ENCODE measurements at regions of chr4 and their contacts with region 1.

Region 1: DNA sequence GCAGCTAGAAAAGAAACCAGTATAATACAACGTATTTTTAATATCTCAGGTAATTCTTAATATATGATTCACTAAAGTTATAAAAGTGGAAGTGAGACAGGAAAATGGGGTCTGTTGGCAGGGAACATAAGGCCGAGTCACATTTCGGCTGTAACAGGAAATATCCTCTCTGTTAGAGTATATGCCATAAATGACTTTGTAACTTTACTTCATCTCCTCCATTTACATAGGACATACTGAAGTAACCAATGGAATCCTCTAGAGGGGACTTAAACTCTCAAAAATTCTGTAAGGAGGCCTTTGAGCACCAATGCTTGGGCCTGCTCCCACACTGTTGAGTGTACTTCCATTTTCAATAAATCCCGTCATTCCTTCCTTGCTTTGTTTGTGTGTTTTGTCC is 71.3 kb downstream of the ANKRD17 start:
- DNase-seq: no peak
- H3K4me3 ChIP-seq: no peak overlapping the region
- H3K27ac ChIP-seq: no peak overlapping the region
- H3K27me3 ChIP-seq: no peaks in the 10 kb centered on the region
- CTCF ChIP-seq: no peak

Region 2: DNA sequence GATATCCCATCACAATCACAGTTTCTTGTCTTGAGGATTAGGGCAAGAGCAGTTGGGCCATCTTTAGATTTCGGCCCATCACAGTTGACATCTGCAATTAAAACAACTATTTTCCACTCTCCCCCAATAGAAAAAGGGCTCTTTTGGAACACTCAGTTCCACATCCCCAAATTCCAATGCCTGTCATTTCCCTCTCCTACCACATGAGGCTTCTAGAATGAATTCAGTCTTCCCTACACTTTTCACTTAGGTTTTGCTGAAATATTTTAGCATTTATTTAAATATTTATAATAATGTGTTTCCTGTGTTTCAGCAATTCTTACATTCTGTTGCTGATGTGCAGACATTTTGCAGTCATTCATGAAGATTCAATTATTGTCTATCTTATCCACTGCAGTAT is 236.2 kb before region 1 on chr4:
- CTCF ChIA-PET with region 1: no interaction called
- POLR2A ChIA-PET with region 1: no interaction called
- DNase-seq: no peak
- H3K4me3 ChIP-seq: no peak overlapping the region
- H3K27ac ChIP-seq: no peak overlapping the region
- H3K27me3 ChIP-seq: no peaks in the 10 kb centered on the region
- CTCF ChIP-seq: peak; percentile 46

Region 3: DNA sequence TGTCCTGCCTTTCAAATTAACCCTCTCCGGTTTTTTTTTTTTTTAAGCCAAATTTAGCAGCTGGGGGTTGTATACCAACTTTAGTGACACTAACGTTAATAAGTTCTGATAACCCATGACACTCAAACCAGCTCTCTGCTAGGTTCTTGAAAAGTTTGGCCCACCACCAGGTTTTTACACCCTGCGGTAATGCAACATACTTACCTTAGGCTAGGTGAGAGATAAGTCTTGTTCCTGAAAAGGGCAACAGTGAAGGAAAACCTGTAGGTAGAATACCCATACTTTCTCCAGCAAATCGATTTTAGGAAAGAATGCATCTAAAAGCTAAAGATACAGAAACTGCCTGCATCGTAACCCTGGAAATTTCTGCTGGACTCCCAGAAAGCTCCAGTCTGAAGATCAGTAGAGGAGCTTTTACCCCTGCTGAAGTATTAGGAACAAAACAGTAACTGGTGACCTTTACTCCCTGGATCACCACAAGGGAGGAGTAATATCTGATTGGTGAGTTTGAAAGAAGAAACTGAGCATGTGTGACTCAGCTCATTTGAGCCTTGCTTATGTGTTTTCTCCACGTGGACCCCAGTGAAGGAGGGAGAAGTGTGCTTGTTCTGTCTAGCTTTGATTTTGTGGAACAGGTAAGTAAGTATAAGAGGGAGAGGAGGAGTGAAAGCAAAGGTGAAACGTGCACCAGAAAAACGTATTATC is 83.4 kb before region 1 on chr4:
- CTCF ChIA-PET with region 1: no interaction called
- POLR2A ChIA-PET with region 1: no interaction called
- DNase-seq: no peak
- H3K4me3 ChIP-seq: no peak overlapping the region
- H3K27ac ChIP-seq: no peak overlapping the region
- H3K27me3 ChIP-seq: no peaks in the 10 kb centered on the region
- CTCF ChIP-seq: no peak

Region 4: DNA sequence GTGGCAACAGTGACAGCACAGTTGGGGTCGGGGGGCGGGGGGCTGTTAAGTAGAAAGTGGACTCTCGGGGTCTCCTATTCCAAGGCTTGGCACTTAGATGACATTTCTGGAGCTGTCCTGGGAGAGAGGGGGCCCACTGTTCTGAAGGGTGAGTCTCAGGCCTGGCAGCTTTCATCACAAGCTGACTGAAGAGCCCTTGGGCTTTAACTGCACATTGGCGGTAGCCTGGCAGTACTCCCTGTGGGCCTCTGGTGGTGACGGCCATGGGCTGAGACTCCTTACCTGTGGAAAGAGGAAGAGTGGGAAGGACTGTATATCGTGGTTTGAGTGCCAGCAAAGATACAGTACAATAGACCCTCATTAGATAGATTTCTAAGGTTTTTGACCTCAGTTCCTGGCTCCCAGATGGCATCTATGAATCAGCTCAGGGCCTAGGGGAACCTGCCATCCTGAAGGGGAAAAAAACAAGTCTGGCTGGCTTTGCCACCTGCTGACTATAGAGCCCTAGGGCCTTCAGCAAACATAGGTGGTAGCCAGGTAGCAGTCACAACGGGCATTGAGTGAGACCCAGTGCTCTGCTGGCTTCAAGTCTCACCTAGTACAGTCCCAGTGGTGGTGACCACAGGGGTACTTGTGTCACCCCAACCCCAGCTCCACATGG is 16.7 kb before region 1 on chr4:
- CTCF ChIA-PET with region 1: no interaction called
- POLR2A ChIA-PET with region 1: interaction called, 21 read pairs
- DNase-seq: no peak
- H3K4me3 ChIP-seq: no peak overlapping the region
- H3K27ac ChIP-seq: no peak overlapping the region
- H3K27me3 ChIP-seq: no peaks in the 10 kb centered on the region
- CTCF ChIP-seq: no peak